ENCODE measurements at regions of chr12 and their contacts with region 1.

Region 1: DNA sequence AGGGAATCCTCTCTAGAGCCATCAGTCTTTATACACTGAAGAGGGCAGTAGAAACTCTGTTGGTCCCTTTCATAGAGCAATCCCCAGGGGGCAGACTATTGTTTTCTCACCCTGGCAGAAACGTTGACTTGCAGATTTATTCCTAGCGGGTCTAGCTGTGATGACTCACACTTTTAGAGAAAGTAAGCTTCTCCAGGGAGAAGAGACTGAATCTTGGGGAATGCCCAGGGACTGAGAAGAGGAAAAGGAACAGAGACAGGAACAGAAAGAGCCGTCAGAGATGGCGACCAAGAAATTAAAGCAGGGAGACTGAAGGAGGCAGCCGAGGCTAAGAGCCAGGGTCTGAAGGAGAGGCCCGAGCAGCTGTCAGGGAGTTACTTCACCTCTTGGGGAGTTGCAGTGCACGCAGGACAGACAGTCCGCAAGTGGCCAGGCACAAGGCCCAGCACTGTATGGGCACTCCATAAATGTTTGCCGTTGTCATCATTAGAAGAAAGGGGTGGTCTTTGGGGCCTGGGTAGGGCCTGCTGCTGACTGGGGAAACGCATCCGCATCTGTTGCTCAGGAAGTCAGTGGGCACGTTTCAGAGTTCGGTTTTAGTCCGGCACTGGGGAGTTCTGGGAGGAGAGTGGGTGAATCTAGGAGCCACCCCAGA is 13.0 kb downstream of the PLEKHG6 start:
- DNase-seq: peak in 3 of 5 donors; percentile 59 to 77 (median 64)
- ATAC-seq: peak; percentile 46 to 77 (median 48)
- H3K4me3 ChIP-seq: peak overlapping the region in 10 of 12 donors; percentile 2 to 44 (median 21)
- H3K27ac ChIP-seq: peak overlapping the region; percentile 3 to 97 (median 80)
- H3K4me1 ChIP-seq: peaks cover 0 to 67% (median 50%) of the 10 kb centered on the region in 12 donors
- H3K27me3 ChIP-seq: no peaks in the 10 kb centered on the region
- CTCF ChIP-seq: peak; percentile 11 to 63 (median 46)
- POLR2A ChIP-seq: no peak

Region 2: GRCh38 chr12:6367065-6367968 is 43.9 kb after region 1 on chr12:
- intact Hi-C with region 1: loop called in 2 of 10 experiments (anchors 5 kb)
- DNase-seq: peak in 1 of 5 donors; percentile 25
- ATAC-seq: peak in 1 of 4 donors; percentile 25
- H3K4me3 ChIP-seq: no peak overlapping the region
- H3K27ac ChIP-seq: peak overlapping the region in 1 of 12 donors; percentile 80
- H3K4me1 ChIP-seq: peaks cover 0 to 48% (median 9%) of the 10 kb centered on the region in 12 donors
- H3K27me3 ChIP-seq: no peaks in the 10 kb centered on the region
- CTCF ChIP-seq: peak in 9 of 12 donors; percentile 8 to 45 (median 29)
- POLR2A ChIP-seq: no peak

Region 3: GRCh38 chr12:6376079-6376869 is 52.8 kb after region 1 on chr12:
- intact Hi-C with region 1: loop called in 1 of 10 experiments (anchors 5 kb)
- DNase-seq: peak in 4 of 5 donors; percentile 36 to 73 (median 64)
- ATAC-seq: peak; percentile 40 to 76 (median 74)
- H3K4me3 ChIP-seq: no peak overlapping the region
- H3K27ac ChIP-seq: peak overlapping the region in 9 of 12 donors; percentile 6 to 69 (median 47)
- H3K4me1 ChIP-seq: peaks cover 0 to 65% (median 22%) of the 10 kb centered on the region in 12 donors
- H3K27me3 ChIP-seq: no peaks in the 10 kb centered on the region
- CTCF ChIP-seq: peak in 9 of 12 donors; percentile 19 to 54 (median 32)
- POLR2A ChIP-seq: no peak

Region 4: DNA sequence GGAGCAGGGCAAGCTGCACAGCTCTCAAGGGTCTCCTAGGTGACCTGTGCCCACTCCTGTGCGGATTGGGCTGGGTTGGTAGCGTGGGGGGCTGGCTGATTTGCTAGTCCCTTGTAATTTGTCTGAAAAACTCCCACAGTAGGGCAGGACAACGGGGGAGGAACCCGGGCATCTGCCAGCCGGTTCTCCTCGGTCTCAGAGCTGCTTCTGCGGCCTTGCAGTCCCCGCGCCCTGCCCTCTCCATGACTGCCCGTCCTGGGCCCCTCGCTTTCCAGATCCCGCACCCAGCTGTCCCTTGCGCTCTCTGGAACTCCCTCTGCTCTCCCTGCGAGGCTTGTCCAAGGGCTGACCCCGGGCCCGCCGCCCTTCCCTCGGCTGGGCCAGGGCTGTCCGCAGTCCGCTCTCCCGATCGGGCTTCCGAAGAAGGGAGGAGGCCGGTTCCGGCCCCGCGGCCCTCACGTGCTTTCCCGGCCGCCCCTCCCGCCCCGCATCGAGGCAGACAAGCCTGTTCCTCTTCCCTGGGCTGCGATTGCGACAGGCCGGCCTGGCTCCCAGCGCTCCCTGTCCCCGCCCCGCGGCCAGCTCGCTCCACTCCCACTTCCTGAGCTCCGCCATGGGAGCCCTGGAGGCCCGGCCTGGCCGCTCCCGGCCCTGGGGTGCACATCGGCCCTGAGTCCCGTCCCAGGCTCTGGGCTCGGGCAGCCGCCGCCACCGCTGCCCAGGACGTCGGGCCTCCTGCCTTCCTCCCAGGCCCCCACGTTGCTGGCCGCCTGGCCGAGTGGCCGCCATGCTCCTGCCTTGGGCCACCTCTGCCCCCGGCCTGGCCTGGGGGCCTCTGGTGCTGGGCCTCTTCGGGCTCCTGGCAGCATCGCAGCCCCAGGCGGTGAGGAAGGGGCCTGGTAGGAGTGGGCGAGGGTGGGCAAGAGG is 60.4 kb after region 1 on chr12 and contains the start of gene LTBR:
- intact Hi-C with region 1: loop called in 1 of 10 experiments (anchors 5 kb)
- DNase-seq: peak; percentile 96 to 99 (median 98)
- ATAC-seq: peak; percentile 92 to 98 (median 97)
- H3K4me3 ChIP-seq: peak within 1 kb of the TSS; percentile 45 to 92 (median 78)
- H3K27ac ChIP-seq: peak within 1 kb of the TSS; percentile 75 to 98 (median 94)
- H3K4me1 ChIP-seq: peaks cover 0 to 75% (median 24%) of the 10 kb centered on the region in 12 donors
- H3K27me3 ChIP-seq: no peaks in the 10 kb centered on the region
- CTCF ChIP-seq: peak in 3 of 12 donors; percentile 7 to 43 (median 32)
- POLR2A ChIP-seq: peak in 1 of 2 donors; percentile 74
- total RNA-seq, gene LTBR: 16.0 to 83.4 (median 26.2) TPM

Region 5: GRCh38 chr12:6430124-6430989 is 106.9 kb after region 1 on chr12:
- intact Hi-C with region 1: no loop called
- DNase-seq: peak; percentile 58 to 86 (median 69)
- ATAC-seq: peak; percentile 72 to 91 (median 88)
- H3K4me3 ChIP-seq: peak overlapping the region in 9 of 12 donors; percentile 20 to 51 (median 34)
- H3K27ac ChIP-seq: peak overlapping the region in 10 of 12 donors; percentile 8 to 81 (median 56)
- H3K4me1 ChIP-seq: peaks cover 0 to 25% (median 5%) of the 10 kb centered on the region in 12 donors
- H3K27me3 ChIP-seq: no peaks in the 10 kb centered on the region
- CTCF ChIP-seq: no peak
- POLR2A ChIP-seq: no peak